ENCODE measurements at regions of chr12 and their contacts with region 1.

Region 1: DNA sequence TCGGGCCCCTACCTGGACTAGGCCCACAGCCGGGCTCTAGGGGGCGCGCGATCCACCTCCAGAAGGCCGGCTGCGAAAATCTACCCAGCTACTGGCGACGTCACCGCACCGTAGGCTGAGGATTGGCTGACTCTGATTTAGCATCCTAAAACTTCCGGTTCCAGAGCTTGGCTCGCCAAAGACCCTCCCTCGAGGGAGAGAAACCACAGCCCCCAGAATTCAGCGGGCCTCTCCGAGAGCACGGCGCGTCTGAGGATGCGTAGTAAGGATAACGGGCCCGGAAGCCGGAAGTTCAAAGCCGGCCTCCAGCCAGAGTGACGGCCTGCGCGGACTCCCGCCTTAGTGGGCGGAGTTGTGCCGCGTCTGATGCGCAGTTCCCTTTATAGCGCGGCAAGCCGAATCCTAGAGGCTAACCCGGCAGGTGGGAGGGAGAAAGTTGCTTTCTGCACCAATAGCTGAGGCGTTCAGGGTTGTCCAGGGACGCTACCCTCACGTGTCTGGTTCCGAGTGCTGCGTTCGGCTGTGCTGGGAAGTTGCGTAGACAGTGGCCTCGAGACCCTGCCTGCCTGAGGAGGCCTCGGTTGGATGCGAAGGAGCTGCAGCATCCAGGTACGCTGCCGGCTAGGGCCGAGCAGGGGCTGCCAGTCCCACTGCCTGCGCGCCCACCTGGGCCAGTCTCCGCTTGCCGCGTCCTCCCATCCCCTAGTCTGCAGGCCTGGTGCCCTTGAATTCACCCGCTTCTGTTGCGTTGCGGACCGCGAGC is at the start of gene COX14:
- DNase-seq: peak; percentile 99
- ATAC-seq: peak; percentile 91
- H3K4me3 Mint-ChIP-seq: peak within 1 kb of the TSS; percentile 95
- H3K27ac Mint-ChIP-seq: peak within 1 kb of the TSS; percentile 99
- H3K4me1 Mint-ChIP-seq: peaks cover 39% of the 10 kb centered on the region
- H3K27me3 Mint-ChIP-seq: no peaks in the 10 kb centered on the region
- total RNA-seq, gene COX14: 50.0 to 51.6 TPM

Region 2: GRCh38 chr12:49945394-49946080 is 166.3 kb before region 1 on chr12:
- CTCF ChIA-PET with region 1: interaction called, 14 read pairs
- POLR2A ChIA-PET with region 1: no interaction called
- DNase-seq: peak; percentile 88
- ATAC-seq: peak; percentile 99
- H3K4me3 Mint-ChIP-seq: peak overlapping the region; percentile 70
- H3K27ac Mint-ChIP-seq: peak overlapping the region; percentile 92
- H3K4me1 Mint-ChIP-seq: peaks cover 24% of the 10 kb centered on the region
- H3K27me3 Mint-ChIP-seq: no peaks in the 10 kb centered on the region

Region 3: DNA sequence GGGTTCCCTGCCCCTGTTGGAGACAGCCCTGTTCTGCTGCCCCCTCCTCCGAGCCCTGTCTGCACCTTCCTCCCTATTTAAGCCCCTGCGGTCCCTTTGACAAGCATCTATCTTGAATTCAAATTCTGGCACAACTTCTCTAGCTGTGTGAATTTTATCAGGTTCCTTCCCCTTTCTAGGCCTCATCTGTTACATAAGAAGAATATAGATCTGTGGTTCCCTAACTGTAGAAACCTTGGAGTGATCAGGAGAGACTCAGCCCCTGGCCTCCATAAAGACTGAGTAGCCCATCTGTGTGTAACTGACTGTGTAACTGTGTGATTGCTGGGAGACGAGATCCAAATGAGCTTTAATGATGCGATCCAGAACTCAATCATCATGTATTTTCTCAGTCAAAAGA is 73.5 kb before region 1 on chr12:
- CTCF ChIA-PET with region 1: interaction called, 13 read pairs
- POLR2A ChIA-PET with region 1: no interaction called
- DNase-seq: no peak
- ATAC-seq: no peak
- H3K4me3 Mint-ChIP-seq: no peak overlapping the region
- H3K27ac Mint-ChIP-seq: no peak overlapping the region
- H3K4me1 Mint-ChIP-seq: peaks cover 4% of the 10 kb centered on the region
- H3K27me3 Mint-ChIP-seq: peaks cover 10% of the 10 kb centered on the region

Region 4: GRCh38 chr12:50084775-50085614 is 26.9 kb before region 1 on chr12 and contains the start of gene SMARCD1:
- CTCF ChIA-PET with region 1: interaction called, 144 read pairs
- POLR2A ChIA-PET with region 1: interaction called, 44 read pairs
- DNase-seq: peak; percentile 86
- ATAC-seq: peak; percentile 90
- H3K4me3 Mint-ChIP-seq: peak within 1 kb of the TSS; percentile 90
- H3K27ac Mint-ChIP-seq: peak within 1 kb of the TSS; percentile 94
- H3K4me1 Mint-ChIP-seq: peaks cover 29% of the 10 kb centered on the region
- H3K27me3 Mint-ChIP-seq: no peaks in the 10 kb centered on the region
- total RNA-seq, gene SMARCD1: 72.3 to 78.1 TPM

Region 5: DNA sequence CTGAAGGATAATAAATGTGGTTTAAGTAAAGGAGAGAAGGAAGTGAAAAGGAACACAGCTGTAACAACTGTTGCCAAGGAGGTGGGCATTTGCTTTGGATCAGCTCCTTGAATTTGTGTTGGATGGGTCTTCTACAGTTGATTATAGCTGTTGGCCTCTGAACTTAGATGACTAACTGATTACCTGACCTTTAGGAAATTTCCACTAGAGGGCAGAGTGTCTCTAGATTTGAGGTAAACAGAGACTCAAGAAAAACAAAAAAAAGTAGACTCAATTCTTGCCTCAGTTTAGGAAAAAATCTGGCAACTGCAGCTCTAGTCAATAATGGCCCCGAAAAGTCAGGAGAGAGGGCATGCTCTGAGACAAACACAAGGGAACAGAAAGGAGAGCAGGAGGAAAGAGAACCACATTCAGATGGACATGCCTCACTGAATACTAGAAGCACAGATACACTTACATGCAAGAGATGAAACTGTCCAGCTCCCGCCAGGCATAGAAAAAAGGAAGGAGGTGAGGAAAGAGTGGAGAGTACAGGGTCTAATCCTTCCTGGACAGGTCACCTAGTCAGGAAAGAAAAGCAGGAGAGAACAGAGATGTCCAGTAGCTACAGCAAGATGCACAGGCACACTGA is 20.7 kb after region 1 on chr12:
- CTCF ChIA-PET with region 1: interaction called, 114 read pairs
- POLR2A ChIA-PET with region 1: interaction called, 5 read pairs
- DNase-seq: no peak
- ATAC-seq: no peak
- H3K4me3 Mint-ChIP-seq: no peak overlapping the region
- H3K27ac Mint-ChIP-seq: no peak overlapping the region
- H3K4me1 Mint-ChIP-seq: peaks cover 5% of the 10 kb centered on the region
- H3K27me3 Mint-ChIP-seq: no peaks in the 10 kb centered on the region

Region 6: DNA sequence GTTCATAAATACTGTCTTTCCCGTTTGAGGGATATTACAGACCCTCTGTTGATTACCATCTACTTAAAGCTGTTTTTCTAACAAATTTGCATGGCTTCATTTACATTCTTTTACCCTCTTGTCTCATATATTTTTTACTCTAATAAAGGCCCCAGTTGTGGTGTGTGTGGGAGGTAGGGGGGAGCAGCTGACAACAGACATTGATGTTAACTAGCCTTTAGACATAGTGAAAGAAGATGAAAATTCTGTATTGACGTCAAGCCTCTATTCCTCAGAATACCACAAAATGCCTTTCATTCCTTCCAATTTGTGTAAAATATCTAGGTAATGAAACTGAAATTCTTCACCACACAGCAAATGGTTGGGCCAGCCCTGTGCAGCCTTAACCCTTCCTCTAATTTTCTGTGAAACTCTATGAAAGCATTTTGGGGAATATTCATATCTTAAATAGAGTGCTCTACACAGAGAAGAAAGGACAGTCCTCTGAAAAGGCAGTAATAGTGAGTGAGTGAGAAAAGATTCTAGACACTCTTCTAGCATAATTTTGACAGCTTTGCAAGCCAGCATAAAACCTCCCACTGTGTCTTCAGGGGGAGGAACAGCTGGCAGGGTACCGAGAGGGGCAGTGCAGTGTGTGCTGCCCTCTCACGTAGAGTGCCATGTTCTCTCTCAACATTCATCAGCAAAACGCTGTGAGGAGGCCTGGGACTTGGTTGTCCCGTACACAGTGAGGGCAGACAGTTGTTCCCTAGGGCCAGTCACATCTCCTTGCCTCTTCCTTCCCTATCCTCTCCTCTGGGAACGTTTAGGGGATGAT is 75.4 kb after region 1 on chr12:
- CTCF ChIA-PET with region 1: interaction called, 24 read pairs
- POLR2A ChIA-PET with region 1: interaction called, 3 read pairs
- DNase-seq: no peak
- ATAC-seq: peak; percentile 47
- H3K4me3 Mint-ChIP-seq: no peak overlapping the region
- H3K27ac Mint-ChIP-seq: peak overlapping the region; percentile 7
- H3K4me1 Mint-ChIP-seq: peaks cover 50% of the 10 kb centered on the region
- H3K27me3 Mint-ChIP-seq: no peaks in the 10 kb centered on the region

Region 7: DNA sequence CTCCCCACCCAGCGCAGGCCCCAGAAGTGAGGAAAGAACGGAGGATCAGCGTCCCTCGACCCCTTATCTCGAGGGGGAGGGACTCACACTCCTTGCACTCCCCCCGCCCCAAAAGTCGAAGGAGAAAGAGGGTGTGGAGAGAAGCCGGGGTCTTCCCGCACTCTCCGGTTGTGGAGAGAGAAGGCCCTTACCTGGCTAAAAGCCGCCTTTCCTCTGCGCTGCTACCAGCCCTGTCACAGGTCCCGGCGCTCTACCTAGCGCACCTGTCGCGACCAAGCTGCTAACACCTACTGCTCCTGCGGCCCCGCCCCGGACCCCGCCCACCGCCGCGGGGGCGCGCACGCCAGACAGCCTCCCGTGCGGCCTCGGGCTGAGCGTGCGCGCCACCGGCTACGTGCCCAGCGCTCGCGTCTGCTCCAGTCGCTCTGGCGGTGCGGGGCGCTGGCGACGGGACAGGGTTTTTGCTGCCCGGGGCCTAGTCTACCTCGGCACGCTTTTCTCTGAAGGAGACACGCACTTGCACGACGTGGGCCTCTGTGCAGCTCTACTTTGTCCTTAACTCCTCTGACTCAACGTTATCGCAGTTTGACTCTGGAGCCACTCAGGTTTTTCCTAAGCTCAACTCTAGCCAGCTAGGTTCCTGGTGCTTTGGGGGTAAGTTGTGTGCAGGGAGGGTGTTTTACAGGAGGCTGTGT is 171.5 kb after region 1 on chr12 and contains the start of gene LIMA1:
- CTCF ChIA-PET with region 1: interaction called, 18 read pairs
- POLR2A ChIA-PET with region 1: interaction called, 8 read pairs
- DNase-seq: peak; percentile 94
- ATAC-seq: peak; percentile 98
- H3K4me3 Mint-ChIP-seq: peak within 1 kb of the TSS; percentile 87
- H3K27ac Mint-ChIP-seq: peak within 1 kb of the TSS; percentile 85
- H3K4me1 Mint-ChIP-seq: peaks cover 20% of the 10 kb centered on the region
- H3K27me3 Mint-ChIP-seq: peaks cover 13% of the 10 kb centered on the region
- total RNA-seq, gene LIMA1: 19.4 to 19.9 TPM

Measured in activated CD8-positive, alpha-beta T cell treated with anti-CD3 and anti-CD28 coated beads, Interleukin-2, amount 10 ng/mL, durations not matched to agents 7 days and 5 days (primary cell).